Dorsolateral prefrontal cortex (tissue), 120 donors: ENCODE measurements at regions of chr7 and their contacts with region 1.

Region 1: DNA sequence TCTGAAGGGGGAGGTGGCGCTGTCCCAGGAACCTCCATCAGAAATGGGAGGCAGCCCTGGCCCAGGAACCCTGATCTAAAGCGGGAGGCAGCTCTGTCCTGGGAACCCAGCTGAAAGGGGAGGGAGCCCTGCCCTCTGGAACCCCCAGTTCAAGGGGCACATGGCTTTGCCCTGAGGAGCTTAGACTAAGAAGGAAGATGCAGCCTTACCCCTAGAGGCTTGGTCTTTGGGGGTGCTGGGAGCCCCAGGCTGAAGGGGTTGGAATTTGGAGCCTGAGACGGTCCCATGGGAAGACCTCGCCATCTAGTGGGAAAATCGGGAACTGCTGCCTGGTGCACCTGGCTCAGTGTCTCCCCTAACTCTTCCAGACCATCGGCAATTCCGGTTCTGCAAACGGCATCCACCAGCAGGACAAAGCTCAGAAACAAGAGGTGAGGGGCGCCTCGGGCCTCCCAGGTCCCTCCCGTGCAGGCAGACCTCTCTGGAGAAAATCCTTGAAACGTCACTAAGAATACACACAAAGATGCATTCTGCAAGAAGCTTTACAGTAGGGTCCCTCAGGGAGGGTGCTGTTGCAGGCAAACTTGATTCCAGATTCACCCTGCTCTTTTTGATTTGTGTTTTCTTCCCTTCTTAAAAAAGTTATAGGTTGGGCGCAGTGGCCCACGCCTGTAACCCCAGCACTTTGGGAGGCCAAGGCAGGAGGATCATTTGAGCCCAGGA is 52.4 kb upstream of the GTF2IRD1 start:
- DNase-seq: peak; percentile 67 to 86 (median 76)
- H3K4me3 ChIP-seq: no peak overlapping the region
- H3K27ac ChIP-seq: peak overlapping the region in 23 of 59 donors; percentile 8 to 71 (median 35)
- H3K27me3 ChIP-seq: no peaks in the 10 kb centered on the region
- CTCF ChIP-seq: peak; percentile 88 to 99 (median 96)

Region 2: GRCh38 chr7:73865738-73866445 is 535.4 kb before region 1 on chr7:
- intact Hi-C with region 1: loop called in 1 of 2 experiments (anchors 10 kb)
- DNase-seq: peak in 6 of 10 donors; percentile 14 to 59 (median 46)
- H3K4me3 ChIP-seq: no peak overlapping the region
- H3K27ac ChIP-seq: no peak overlapping the region
- H3K27me3 ChIP-seq: no peaks in the 10 kb centered on the region
- CTCF ChIP-seq: peak in 55 of 56 donors; percentile 37 to 75 (median 61)

Region 3: GRCh38 chr7:74206589-74207120 is 194.6 kb before region 1 on chr7:
- intact Hi-C with region 1: loop called (anchors 1 to 2 kb)
- DNase-seq: peak; percentile 80 to 91 (median 86)
- H3K4me3 ChIP-seq: peak overlapping the region in 57 of 59 donors; percentile 14 to 62 (median 37)
- H3K27ac ChIP-seq: peak overlapping the region in 6 of 59 donors; percentile 6 to 76 (median 48)
- H3K27me3 ChIP-seq: no peaks in the 10 kb centered on the region
- CTCF ChIP-seq: peak; percentile 85 to 99 (median 98)